ENCODE measurements at regions of chr11 and their contacts with region 1.

Region 1: GRCh38 chr11:66051766-66052663 is at the start of gene SF3B2:
- DNase-seq: peak; percentile 98
- ATAC-seq: peak; percentile 98
- H3K4me3 ChIP-seq: peak within 1 kb of the TSS; percentile 78 to 99 (median 88)
- H3K4me3 Mint-ChIP-seq: peak within 1 kb of the TSS; percentile 99
- H3K27ac ChIP-seq: peak within 1 kb of the TSS; percentile 61 to 85
- H3K27ac Mint-ChIP-seq: peak within 1 kb of the TSS; percentile 96
- H3K4me1 ChIP-seq: peaks cover 25 to 29% of the 10 kb centered on the region in 2 donors
- H3K4me1 Mint-ChIP-seq: peaks cover 29% of the 10 kb centered on the region
- H3K27me3 ChIP-seq: peaks cover 0 to 27% (median 5%) of the 10 kb centered on the region in 4 experiments
- H3K27me3 Mint-ChIP-seq: peaks cover 12% of the 10 kb centered on the region
- CTCF ChIP-seq: no peak
- total RNA-seq, gene SF3B2: 205 and 214 TPM in 2 replicates

Region 2: DNA sequence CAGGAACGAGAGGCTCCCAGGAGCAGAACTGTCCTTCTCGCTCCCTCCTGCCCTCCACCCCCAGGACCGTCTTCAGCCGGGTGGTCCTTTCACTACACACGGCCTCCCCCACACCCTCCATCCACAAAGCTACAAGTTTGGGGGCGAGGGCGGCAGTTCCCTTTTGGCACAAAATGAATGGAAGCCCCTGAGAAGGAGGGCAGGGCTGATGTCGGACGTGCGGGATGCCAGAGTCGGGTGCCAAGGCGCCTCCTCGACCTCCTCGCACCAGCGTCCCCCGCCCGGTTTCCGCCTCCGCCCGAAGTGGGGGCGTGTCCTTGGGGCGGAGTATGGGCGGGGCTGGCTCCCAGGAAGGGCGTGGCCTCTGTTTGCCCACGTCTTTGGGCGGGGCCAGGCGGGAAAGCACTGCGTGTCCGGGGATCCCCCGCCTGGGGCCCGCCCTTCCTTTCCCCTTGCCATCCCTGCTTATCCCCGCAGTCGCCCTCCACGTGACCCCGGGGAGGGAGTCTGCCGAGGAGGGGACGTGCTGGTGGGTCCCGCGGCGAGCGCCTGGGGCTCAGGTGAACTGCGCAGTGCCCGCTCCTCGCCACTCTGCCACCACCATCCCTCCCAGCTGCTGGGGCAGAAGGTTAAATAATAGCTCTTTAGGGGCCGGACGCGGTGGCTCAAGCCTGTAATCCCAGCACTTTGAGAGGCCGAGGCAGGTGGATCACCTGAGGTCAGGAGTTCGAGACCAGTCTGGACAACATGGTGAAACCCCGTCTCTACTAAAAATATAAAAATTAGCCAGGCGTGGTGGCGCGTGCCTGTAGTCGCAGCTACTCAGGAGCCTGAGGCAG is 178.5 kb before region 1 on chr11:
- CTCF ChIA-PET with region 1: no interaction called
- POLR2A ChIA-PET with region 1: interaction called, 3 read pairs
- intact Hi-C with region 1: loop called (anchors 5 kb)
- DNase-seq: peak; percentile 97
- ATAC-seq: peak; percentile 98
- H3K4me3 ChIP-seq: peak overlapping the region; percentile 52 to 79 (median 63)
- H3K4me3 Mint-ChIP-seq: peak overlapping the region; percentile 92
- H3K27ac ChIP-seq: peak overlapping the region; percentile 81 to 91
- H3K27ac Mint-ChIP-seq: peak overlapping the region; percentile 91
- H3K4me1 ChIP-seq: peaks cover 10 to 29% of the 10 kb centered on the region in 2 donors
- H3K4me1 Mint-ChIP-seq: peaks cover 26% of the 10 kb centered on the region
- H3K27me3 ChIP-seq: no peaks in the 10 kb centered on the region
- H3K27me3 Mint-ChIP-seq: peaks cover 5% of the 10 kb centered on the region
- CTCF ChIP-seq: no peak

Region 3: DNA sequence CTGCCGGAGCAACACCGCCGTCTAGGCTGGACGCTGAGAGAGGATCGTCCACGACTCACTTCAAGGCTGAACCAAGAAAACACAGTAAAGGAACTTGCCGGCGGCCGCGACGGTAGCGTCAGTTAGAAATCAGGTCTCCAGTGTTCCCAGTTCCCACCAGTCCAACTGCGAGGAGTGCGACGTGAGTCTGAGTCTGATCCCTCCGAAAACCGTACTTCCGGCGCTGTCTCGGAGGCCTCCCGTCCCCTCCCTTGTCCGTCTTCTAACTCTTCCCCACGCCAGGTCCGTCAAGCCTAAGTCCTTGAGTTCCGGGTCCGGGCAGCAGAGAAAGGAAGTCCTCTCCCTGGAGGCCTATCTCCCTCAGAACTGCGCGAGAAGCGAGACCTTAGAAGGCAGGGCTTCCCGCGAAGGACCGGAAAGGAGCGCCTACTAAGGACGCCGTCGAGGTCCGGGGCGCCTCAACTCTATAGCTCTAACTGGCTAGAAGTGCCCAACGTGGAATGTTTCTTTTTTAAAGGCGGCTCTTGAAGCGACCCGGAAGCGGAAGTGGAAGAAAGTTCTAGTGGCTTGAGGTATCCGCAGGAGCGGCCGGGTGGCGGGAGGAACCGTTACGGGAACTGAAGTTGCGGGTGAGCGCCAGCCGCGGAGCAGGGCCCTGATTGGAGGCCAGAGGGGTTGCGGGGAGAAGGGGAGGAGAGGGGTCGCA is 49.9 kb before region 1 on chr11 and contains the starts of genes BANF1 and EIF1AD:
- CTCF ChIA-PET with region 1: interaction called, 3 read pairs
- POLR2A ChIA-PET with region 1: interaction called, 8 read pairs
- intact Hi-C with region 1: loop called (anchors 1 kb)
- DNase-seq: peak; percentile 98
- ATAC-seq: peak; percentile 80
- H3K4me3 ChIP-seq: peak within 1 kb of the TSS; percentile 75 to 100 (median 96)
- H3K4me3 Mint-ChIP-seq: peak within 1 kb of the TSS; percentile 98
- H3K27ac ChIP-seq: peak within 1 kb of the TSS; percentile 89 to 94
- H3K27ac Mint-ChIP-seq: peak within 1 kb of the TSS; percentile 99
- H3K4me1 ChIP-seq: peaks cover 16 to 25% of the 10 kb centered on the region in 2 donors
- H3K4me1 Mint-ChIP-seq: peaks cover 34% of the 10 kb centered on the region
- H3K27me3 ChIP-seq: no peaks in the 10 kb centered on the region
- H3K27me3 Mint-ChIP-seq: no peaks in the 10 kb centered on the region
- CTCF ChIP-seq: no peak
- total RNA-seq, gene BANF1: 99.3 and 99.5 TPM in 2 replicates
- total RNA-seq, gene EIF1AD: 61.0 and 65.2 TPM in 2 replicates

Region 4: GRCh38 chr11:66069715-66070603 is 17.9 kb after region 1 on chr11 and contains the start of gene PACS1:
- CTCF ChIA-PET with region 1: interaction called, 78 read pairs
- POLR2A ChIA-PET with region 1: interaction called, 5 read pairs
- intact Hi-C with region 1: loop called (anchors 1 kb)
- DNase-seq: peak; percentile 90
- ATAC-seq: peak; percentile 74
- H3K4me3 ChIP-seq: peak within 1 kb of the TSS; percentile 66 to 92 (median 76)
- H3K4me3 Mint-ChIP-seq: peak within 1 kb of the TSS; percentile 94
- H3K27ac ChIP-seq: peak within 1 kb of the TSS; percentile 69 to 76
- H3K27ac Mint-ChIP-seq: peak within 1 kb of the TSS; percentile 99
- H3K4me1 ChIP-seq: peaks cover 50 to 51% of the 10 kb centered on the region in 2 donors
- H3K4me1 Mint-ChIP-seq: peaks cover 66% of the 10 kb centered on the region
- H3K27me3 ChIP-seq: no peaks in the 10 kb centered on the region
- H3K27me3 Mint-ChIP-seq: no peaks in the 10 kb centered on the region
- CTCF ChIP-seq: no peak
- total RNA-seq, gene PACS1: 303 and 325 TPM in 2 replicates

Region 5: DNA sequence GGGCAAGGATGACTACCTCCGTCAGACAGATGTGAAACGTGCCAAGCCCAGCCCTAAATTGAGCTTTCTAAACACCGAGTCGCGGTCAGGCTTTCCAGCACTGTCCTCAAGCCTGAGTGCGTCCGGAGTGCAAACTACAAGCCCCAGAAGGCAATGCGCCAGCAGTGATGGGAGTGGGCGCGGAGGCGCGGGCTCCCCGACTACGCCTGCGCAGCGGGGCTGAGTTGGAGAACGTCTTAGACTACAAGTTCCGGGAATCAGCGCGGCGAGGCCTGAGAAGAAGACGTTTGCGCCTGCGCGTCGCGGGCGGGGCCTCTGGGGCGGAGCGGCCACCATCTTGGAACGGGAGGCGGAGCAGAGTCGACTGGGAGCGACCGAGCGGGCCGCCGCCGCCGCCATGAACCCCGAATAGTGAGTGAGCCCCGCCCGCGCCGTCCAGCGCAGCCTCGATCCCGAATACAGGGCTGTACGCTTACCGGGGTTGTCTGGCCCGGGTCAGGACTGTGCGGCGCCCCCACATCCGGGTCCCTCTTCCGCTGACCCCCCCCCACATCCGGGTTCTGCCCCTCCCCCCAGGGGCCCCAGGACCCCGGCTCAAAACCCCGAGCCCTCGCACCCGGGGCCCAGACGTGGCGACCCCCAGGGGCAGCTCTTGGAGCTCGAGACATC is 216.4 kb after region 1 on chr11 and contains the start of gene RAB1B:
- CTCF ChIA-PET with region 1: no interaction called
- POLR2A ChIA-PET with region 1: interaction called, 10 read pairs
- intact Hi-C with region 1: loop called (anchors 1 kb)
- DNase-seq: peak; percentile 100
- ATAC-seq: peak; percentile 77
- H3K4me3 ChIP-seq: peak within 1 kb of the TSS; percentile 83 to 100 (median 98)
- H3K4me3 Mint-ChIP-seq: peak within 1 kb of the TSS; percentile 95
- H3K27ac ChIP-seq: peak within 1 kb of the TSS; percentile 81 to 97
- H3K27ac Mint-ChIP-seq: peak within 1 kb of the TSS; percentile 96
- H3K4me1 ChIP-seq: peaks cover 14 to 27% of the 10 kb centered on the region in 2 donors
- H3K4me1 Mint-ChIP-seq: peaks cover 29% of the 10 kb centered on the region
- H3K27me3 ChIP-seq: no peaks in the 10 kb centered on the region
- H3K27me3 Mint-ChIP-seq: no peaks in the 10 kb centered on the region
- CTCF ChIP-seq: no peak
- total RNA-seq, gene RAB1B: 76.0 and 77.8 TPM in 2 replicates

Measured in B cell (primary cell).